AG04449 (cell line): ENCODE measurements at regions of chr2 and their contacts with region 1.

Region 1: DNA sequence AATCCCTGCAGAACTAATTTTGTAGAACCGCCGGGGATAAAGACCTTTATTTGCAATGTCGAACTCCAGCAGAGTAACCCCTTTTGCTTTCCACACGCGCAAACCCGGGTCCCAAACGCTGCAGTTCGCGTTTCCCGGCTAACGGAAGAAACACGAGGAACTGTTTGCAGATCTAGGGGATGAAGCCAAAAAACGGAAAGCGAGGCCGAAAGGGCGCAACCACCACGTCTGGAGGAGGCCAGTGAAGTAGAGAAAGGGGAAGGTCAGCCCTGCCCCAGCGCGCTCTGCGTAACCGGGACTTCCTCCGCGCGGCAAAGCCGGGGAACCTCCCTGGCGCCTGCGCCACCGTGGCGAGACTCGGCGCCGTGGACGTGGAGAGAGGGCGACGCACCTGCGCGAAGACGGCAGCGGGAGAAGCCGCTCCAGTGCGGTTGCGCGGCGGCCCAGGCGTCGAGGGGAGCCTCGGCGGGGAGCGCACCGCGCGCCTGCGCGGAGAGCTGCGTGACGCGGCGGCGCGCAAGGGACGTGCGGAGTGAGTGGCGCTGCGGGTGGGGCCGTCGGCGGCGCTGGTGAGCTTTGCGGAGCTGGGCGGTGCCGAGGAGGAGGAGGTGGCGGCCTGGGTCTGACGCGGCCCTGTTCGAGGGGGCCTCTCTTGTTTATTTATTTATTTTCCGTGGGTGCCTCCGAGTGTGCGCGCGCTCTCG is at the start of gene PPP1CB:
- DNase-seq: peak; percentile 65
- H3K4me3 ChIP-seq: peak within 1 kb of the TSS; percentile 91
- CTCF ChIP-seq: peak; percentile 57

Region 2: GRCh38 chr2:28583899-28584553 is 167.4 kb before region 1 on chr2:
- CTCF ChIA-PET with region 1: interaction called, 10 read pairs
- POLR2A ChIA-PET with region 1: interaction called, 4 read pairs
- DNase-seq: peak; percentile 55
- H3K4me3 ChIP-seq: peak overlapping the region; percentile 36
- CTCF ChIP-seq: no peak

Region 3: GRCh38 chr2:28796620-28797019 is 45.2 kb after region 1 on chr2:
- CTCF ChIA-PET with region 1: no interaction called
- POLR2A ChIA-PET with region 1: no interaction called
- DNase-seq: no peak
- H3K4me3 ChIP-seq: no peak overlapping the region
- CTCF ChIP-seq: no peak